Colonic mucosa (tissue), 4 donors: ENCODE measurements at regions of chr17 and their contacts with region 1.

Region 1: GRCh38 chr17:1275962-1276736 is 3.3 kb upstream of the TRARG1 start:
- DNase-seq: peak; percentile 69
- H3K4me3 ChIP-seq: no peak overlapping the region
- H3K27ac ChIP-seq: no peak overlapping the region
- H3K4me1 ChIP-seq: no peaks in the 10 kb centered on the region
- H3K27me3 ChIP-seq: peaks cover 21% of the 10 kb centered on the region
- CTCF ChIP-seq: peak; percentile 67

Region 2: DNA sequence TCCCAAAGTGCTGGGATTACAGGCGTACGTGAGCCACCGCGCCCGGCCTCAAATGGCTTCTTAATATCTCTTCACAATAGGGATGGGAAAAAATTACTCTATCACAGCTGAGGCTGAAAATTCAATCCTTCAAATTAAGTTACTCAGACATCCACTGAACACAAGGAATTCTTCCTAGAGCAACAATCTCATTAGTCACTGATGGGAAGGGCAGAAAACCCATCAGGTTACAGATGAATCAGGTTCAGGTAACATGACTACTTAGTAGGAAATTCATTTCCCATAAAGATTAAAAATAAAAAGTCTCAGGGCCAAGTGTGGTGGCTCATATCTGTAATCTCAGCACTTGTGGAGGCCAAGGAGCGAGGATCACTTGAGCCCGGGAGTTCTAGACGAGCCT is 53.8 kb before region 1 on chr17:
- intact Hi-C with region 1: no loop called
- DNase-seq: no peak
- H3K4me3 ChIP-seq: no peak overlapping the region
- H3K27ac ChIP-seq: no peak overlapping the region
- H3K4me1 ChIP-seq: no peaks in the 10 kb centered on the region
- H3K27me3 ChIP-seq: no peaks in the 10 kb centered on the region
- CTCF ChIP-seq: no peak

Region 3: GRCh38 chr17:1331708-1332107 is 55.6 kb after region 1 on chr17:
- intact Hi-C with region 1: loop called (anchors 5 kb)
- DNase-seq: no peak
- H3K4me3 ChIP-seq: no peak overlapping the region
- H3K27ac ChIP-seq: no peak overlapping the region
- H3K4me1 ChIP-seq: no peaks in the 10 kb centered on the region
- H3K27me3 ChIP-seq: no peaks in the 10 kb centered on the region
- CTCF ChIP-seq: no peak

Region 4: GRCh38 chr17:1344521-1344920 is 68.4 kb after region 1 on chr17:
- intact Hi-C with region 1: no loop called
- DNase-seq: no peak
- H3K4me3 ChIP-seq: no peak overlapping the region
- H3K27ac ChIP-seq: no peak overlapping the region
- H3K4me1 ChIP-seq: no peaks in the 10 kb centered on the region
- H3K27me3 ChIP-seq: no peaks in the 10 kb centered on the region
- CTCF ChIP-seq: no peak